ENCODE measurements at regions of chr3 and their contacts with region 1.

Region 1: DNA sequence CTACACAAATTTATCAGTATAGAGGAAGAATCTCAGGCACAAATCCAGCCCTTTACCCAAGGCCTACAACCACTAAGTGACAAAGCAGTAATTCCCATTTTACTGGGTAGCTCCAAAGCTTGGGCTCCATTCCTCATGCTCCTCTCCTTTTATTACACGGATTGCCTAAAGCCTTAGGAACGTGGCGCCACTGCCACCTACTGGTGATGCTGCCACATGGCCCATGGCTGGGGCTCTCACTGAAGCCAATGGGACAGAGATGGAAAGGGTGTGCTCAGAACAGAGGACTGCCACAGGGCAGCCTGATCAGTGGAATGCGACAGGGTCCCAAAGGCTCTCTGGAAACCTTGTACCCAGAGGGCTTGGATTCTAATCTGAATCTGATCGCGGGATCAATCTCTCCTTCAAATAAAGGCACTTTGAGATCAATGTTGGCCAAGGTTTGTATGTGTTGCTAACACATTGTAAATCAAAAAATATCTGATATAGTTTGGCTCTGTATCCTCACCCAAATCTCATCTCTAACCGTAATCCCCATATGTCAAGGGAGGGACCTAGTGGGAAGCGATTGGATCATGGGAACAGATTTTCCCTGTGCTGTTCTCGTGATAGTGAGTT is 33.5 kb upstream of the LYZL4 start:
- DNase-seq: peak; percentile 29 to 87
- H3K4me3 ChIP-seq: no peak overlapping the region
- H3K27ac ChIP-seq: no peak overlapping the region
- H3K4me1 ChIP-seq: no peaks in the 10 kb centered on the region
- H3K27me3 ChIP-seq: no peaks in the 10 kb centered on the region
- CTCF ChIP-seq: peak; percentile 90 to 98 (median 91)

Region 2: GRCh38 chr3:41893977-41894376 is 550.0 kb before region 1 on chr3:
- intact Hi-C with region 1: loop called (anchors 5 kb)
- DNase-seq: no peak
- H3K4me3 ChIP-seq: no peak overlapping the region
- H3K27ac ChIP-seq: no peak overlapping the region
- H3K4me1 ChIP-seq: no peaks in the 10 kb centered on the region
- H3K27me3 ChIP-seq: no peaks in the 10 kb centered on the region
- CTCF ChIP-seq: peak; percentile 37 to 54 (median 43)

Region 3: GRCh38 chr3:42118762-42119361 is 325.1 kb before region 1 on chr3:
- intact Hi-C with region 1: loop called (anchors 10 kb)
- DNase-seq: peak in 1 of 2 donors; percentile 63
- H3K4me3 ChIP-seq: no peak overlapping the region
- H3K27ac ChIP-seq: peak overlapping the region; percentile 30 to 39
- H3K4me1 ChIP-seq: peaks cover 0 to 26% of the 10 kb centered on the region in 2 donors
- H3K27me3 ChIP-seq: no peaks in the 10 kb centered on the region
- CTCF ChIP-seq: peak in 1 of 3 experiments; percentile 18

Region 4: DNA sequence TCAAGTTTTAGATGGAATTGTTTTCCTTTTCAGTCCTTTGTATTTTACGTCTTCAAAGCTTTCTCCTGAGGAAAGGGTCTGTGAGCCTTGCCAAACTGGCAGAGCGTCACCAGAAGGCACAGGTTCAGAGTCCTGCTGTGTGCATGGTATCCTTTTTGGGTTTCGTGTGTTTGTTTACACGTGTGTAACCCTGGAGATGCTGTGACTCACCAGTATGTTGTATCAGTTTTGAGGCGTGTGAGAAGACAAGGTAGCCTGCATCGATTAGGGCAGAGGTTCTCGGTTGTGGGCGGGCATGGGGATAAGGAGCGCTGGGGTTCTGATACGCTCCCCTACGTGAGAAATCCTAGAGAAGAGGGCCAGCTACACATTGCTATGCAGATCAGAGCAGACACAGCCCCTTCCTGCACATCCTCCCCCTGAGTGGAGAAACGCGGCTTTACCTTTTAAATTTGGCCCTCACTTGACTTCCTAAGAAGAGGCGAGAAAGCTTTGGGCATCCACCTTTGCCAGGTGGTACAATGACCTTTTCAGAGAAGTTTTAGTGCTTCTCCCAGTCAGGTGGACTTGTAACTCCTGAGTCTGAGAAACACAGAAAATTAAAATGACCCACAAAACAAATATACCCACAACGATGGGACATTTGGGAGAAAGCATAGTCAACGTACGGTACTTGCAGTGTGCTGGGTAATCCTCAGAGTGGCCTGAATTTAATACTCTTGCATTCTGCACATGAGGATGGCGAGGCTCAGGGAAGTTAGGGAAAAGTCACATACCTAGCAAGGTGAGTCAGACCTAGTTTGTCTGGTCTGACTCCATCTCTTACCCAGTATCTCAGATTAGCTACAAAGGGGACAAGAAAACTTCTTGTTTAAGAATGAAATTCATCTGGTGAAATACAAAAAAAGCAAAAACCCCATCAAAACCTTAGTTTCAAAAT is 314.6 kb before region 1 on chr3:
- intact Hi-C with region 1: no loop called
- DNase-seq: no peak
- H3K4me3 ChIP-seq: no peak overlapping the region
- H3K27ac ChIP-seq: no peak overlapping the region
- H3K4me1 ChIP-seq: no peaks in the 10 kb centered on the region
- H3K27me3 ChIP-seq: no peaks in the 10 kb centered on the region
- CTCF ChIP-seq: no peak

Region 5: DNA sequence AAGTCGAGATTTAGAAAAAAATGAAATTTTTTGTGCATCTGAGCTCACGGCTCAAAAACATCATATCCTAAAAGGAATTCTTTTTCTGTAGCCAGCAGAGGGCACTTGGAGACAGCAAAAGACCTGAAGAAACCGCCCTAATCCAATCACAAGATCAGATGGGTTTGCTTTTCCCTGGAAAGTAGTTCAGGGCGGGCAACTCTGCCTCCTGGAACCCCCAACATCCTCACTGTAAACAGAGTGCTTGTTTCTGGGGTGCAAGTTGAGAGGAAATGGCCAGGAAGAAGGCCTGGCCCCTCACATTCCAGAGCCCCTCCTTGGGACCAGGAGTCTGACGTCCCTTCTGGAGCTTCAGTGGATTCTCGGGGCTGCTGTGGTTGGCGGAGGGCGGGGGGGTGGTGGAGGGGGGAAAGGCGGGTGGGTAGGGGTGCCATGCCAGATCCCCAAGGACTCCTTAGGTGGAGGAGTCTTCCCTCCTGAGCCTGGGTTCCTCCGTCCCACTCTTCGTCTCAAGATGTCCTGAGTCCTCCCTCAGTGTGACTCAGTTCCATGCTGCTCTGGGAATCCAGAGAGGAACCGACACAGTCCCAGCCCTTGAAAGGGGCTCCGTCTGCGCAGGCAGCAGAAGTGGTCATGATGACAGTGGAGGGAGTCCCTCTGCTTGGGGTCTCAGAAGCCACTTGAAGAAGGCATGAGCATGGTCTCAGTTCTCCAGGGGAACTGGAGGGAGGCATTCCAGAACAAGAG is 213.8 kb before region 1 on chr3:
- intact Hi-C with region 1: loop called (anchors 1 kb)
- DNase-seq: no peak
- H3K4me3 ChIP-seq: peak overlapping the region; percentile 30 to 54
- H3K27ac ChIP-seq: no peak overlapping the region
- H3K4me1 ChIP-seq: peaks cover 0 to 7% of the 10 kb centered on the region in 2 donors
- H3K27me3 ChIP-seq: no peaks in the 10 kb centered on the region
- CTCF ChIP-seq: peak; percentile 44 to 63 (median 51)

Region 6: DNA sequence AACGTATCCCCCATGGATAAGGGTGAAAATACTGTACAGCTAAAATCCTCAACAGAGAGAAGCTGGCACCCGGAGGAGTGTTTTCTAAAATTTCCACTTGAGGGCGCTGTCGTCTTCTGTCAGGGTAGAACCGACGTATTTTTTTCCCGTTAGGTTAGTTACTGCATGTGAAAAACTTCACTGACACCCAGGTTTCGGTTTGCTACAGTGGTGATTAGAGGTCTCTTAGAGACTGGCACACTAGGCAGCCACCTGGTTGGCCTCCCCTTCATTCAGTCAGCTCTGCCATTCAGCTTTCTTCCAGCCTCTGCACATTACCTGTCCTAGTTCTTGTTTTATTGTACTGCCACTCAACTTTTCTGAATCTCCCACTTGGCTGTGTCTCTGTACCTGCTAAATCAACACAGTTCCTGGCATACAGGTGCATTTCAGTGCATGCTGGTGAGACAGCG is 196.3 kb before region 1 on chr3:
- intact Hi-C with region 1: loop called (anchors 5 kb)
- DNase-seq: no peak
- H3K4me3 ChIP-seq: no peak overlapping the region
- H3K27ac ChIP-seq: no peak overlapping the region
- H3K4me1 ChIP-seq: no peaks in the 10 kb centered on the region
- H3K27me3 ChIP-seq: no peaks in the 10 kb centered on the region
- CTCF ChIP-seq: peak; percentile 39 to 65 (median 49)

Region 7: DNA sequence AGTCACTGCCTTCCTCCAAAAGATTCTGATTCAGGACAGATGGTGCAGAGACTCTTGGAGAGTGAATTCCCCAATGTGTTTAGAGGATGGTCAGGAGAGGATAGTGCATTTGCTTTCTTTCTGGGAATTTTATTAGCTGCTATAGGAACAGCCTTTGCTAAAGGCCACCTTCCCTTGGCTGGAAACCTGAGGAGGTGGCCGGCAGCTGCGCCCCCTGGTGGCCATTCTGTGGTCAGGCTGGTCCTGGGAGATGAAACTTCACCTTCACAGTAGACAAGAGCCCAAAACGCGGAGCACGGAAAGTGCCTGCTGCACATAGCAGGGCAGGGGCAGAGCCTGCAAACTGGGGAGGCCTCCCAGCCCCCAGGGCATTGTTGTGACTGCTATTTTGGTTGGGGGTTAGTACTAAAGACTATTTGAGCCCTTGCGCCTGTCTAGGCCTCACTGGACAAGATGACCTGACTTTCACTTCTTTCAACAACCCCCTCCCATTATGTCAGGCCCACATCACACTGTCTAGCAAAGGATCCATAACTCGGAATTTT is 103.5 kb after region 1 on chr3:
- intact Hi-C with region 1: loop called (anchors 5 kb)
- DNase-seq: peak in 1 of 2 donors; percentile 77
- H3K4me3 ChIP-seq: no peak overlapping the region
- H3K27ac ChIP-seq: no peak overlapping the region
- H3K4me1 ChIP-seq: peaks cover 6 to 17% of the 10 kb centered on the region in 2 donors
- H3K27me3 ChIP-seq: no peaks in the 10 kb centered on the region
- CTCF ChIP-seq: peak; percentile 76 to 97 (median 93)